ENCODE measurements at regions of chr2 and their contacts with region 1.

Region 1: DNA sequence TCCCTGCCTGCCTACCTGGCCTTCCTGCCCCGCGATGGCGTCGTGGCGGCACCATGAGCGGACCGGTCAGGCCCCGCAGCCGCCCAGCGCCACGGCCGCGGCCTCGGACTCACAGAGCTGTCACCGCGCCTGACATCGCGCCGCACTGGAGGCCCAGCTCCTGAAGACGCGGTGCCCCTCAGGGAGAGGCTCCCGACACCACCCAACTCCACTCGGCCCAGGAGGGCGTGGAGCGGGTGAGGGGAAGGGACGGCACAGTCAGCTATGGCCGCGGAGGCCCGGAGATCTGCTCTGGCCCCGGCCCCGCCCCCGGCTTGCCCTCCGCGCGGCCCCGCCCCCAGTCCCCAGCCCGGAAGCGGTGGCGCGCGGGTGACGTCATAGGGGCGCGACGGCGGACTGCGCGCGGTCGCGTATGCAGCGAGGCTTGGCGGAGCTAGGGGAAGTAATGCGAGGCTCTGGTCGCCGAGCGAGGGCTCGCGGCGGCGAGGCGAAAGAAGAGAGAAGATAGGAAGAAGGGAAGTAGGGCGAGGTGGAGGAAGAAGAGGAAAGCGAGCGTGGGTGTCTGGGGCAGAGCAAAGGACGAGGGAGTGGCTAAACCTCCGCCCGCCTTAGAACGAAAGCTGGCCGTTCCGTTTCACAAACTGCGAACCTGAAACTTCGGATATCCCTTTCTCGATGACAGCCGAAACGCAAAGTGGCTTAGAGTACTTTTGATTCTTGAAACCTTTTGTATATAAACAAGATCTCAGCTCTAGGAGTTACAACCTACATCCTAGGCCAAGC is at the start of gene SLC35F5:
- DNase-seq: peak; percentile 82
- H3K4me3 ChIP-seq: peak within 1 kb of the TSS; percentile 97
- H3K27ac ChIP-seq: peak within 1 kb of the TSS; percentile 80
- H3K27me3 ChIP-seq: no peaks in the 10 kb centered on the region
- CTCF ChIP-seq: no peak

Region 2: DNA sequence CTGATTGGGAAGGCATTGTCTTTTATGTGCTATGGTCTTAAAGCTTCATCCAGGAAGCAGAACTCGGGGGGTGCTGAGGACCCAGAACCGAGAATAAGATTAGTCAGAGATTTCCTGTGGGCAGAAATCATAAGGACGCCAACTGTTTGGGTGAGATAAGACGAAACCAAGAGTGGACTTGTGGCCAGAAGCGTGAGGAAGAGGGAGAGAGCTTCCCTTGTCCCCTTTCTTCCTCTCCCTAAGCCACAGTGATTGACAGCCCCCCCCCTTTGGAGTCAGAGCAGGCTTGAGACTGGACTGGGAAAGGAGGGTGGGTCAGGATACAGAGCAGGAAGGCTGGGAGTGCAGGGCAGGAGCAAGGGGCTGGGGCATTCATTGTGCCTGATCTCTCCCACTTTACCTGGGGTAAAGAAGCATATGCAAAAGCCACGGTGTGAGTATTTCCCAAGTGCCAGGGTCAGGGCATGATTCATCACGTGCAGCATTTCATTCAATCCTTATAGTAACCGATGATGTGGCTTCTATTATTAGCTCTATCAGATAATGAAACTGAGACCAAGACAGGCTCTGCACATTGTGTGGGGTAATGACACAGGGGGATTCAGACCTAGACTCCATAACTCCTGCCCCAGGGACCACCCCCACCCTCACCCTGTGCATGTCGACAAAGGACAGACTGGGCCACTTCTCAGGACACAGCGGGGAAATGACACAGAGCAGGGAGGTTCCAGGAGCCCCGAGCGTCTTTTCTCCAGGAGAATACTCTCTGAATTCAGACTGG is 632.2 kb before region 1 on chr2:
- in situ Hi-C with region 1: no loop called
- DNase-seq: peak; percentile 15
- H3K4me3 ChIP-seq: peak overlapping the region; percentile 3
- H3K27ac ChIP-seq: no peak overlapping the region
- H3K27me3 ChIP-seq: no peaks in the 10 kb centered on the region
- CTCF ChIP-seq: no peak

Region 3: GRCh38 chr2:113965644-113966043 is 209.1 kb after region 1 on chr2:
- in situ Hi-C with region 1: loop called (anchors 25 kb)
- DNase-seq: peak; percentile 44
- H3K4me3 ChIP-seq: no peak overlapping the region
- H3K27ac ChIP-seq: no peak overlapping the region
- H3K27me3 ChIP-seq: no peaks in the 10 kb centered on the region
- CTCF ChIP-seq: peak; percentile 73